ENCODE measurements at regions of chr9 and their contacts with region 1.

Region 1: DNA sequence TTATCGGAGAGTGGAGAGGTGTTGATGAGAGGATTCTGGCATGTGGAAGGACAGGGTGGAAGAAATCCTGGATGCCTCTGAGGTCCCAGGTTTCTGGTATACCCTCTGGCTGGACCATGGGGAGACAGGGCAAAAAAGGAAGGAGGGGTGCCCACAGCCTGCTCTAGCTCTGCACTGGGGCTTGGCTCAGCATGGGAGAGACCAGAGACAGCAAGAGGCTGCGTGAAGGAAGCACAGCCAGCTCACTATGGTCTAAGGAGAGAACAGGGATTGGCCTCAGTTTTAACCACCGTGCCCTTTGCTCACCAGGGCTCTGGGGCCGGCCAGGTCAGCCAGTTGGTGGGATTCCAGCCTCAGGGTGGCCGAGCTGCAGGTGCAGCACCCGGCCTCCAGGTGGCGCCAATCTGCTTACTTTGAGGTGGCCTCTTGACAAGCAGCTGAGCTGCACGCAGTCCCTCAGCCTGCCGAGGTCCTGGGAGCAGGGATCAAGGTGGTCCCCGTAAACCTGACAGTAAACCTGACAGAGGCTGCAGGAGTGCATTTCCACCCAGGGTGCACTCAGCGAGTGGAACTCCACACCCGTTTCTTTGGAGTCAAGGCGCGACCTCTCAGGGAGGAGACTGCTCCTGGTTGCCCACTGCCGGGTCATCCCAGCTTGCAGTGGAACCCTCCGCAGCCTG is 25.0 kb upstream of the SPTLC1 start:
- DNase-seq: peak; percentile 80
- ATAC-seq: peak; percentile 66
- H3K4me3 Mint-ChIP-seq: no peak overlapping the region
- H3K27ac Mint-ChIP-seq: no peak overlapping the region
- H3K4me1 Mint-ChIP-seq: peaks cover 10% of the 10 kb centered on the region
- H3K27me3 Mint-ChIP-seq: peaks cover 38% of the 10 kb centered on the region

Region 2: DNA sequence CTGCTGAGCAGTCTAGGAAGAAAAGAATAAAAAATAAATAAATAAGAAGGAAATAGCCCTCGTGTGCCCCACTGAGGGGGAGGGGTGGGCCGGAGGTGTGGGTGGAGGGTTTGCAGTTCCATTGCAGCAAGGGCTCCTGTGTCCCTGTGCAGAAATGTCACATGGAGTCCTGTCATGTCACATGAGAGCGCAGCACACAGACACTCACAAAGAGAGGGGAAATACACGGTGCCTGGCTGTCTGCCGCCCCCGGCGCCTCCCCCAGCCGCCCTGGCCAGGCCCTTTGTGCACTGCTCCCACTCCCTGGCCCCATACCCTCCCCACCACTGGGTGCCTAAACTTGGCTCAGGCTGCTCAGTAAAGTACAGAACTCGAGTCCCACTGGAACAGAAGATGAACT is 30.6 kb after region 1 on chr9:
- CTCF ChIA-PET with region 1: interaction called, 28 read pairs
- POLR2A ChIA-PET with region 1: no interaction called
- DNase-seq: no peak
- ATAC-seq: no peak
- H3K4me3 Mint-ChIP-seq: no peak overlapping the region
- H3K27ac Mint-ChIP-seq: no peak overlapping the region
- H3K4me1 Mint-ChIP-seq: no peaks in the 10 kb centered on the region
- H3K27me3 Mint-ChIP-seq: peaks cover 21% of the 10 kb centered on the region

Region 3: DNA sequence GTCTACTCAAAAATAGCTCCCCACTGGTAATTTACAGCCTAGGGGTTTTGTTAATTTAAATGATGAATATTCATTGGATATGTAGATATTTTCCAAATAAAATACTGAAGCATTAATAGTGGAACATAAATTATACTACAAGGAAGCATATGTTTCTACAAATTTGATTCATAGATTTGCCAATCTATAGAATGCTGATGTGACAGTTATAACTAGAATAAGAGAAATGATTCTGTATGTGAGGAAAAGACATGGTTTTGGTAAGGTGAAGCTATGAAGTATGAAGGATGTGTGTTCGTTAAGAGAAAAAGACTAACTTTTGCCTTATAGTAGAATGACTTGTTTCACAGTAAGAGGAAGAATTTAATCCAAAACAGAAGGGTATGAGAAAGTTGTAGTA is 92.0 kb after region 1 on chr9:
- CTCF ChIA-PET with region 1: interaction called, 14 read pairs
- POLR2A ChIA-PET with region 1: no interaction called
- DNase-seq: no peak
- ATAC-seq: no peak
- H3K4me3 Mint-ChIP-seq: no peak overlapping the region
- H3K27ac Mint-ChIP-seq: no peak overlapping the region
- H3K4me1 Mint-ChIP-seq: no peaks in the 10 kb centered on the region
- H3K27me3 Mint-ChIP-seq: no peaks in the 10 kb centered on the region

Region 4: DNA sequence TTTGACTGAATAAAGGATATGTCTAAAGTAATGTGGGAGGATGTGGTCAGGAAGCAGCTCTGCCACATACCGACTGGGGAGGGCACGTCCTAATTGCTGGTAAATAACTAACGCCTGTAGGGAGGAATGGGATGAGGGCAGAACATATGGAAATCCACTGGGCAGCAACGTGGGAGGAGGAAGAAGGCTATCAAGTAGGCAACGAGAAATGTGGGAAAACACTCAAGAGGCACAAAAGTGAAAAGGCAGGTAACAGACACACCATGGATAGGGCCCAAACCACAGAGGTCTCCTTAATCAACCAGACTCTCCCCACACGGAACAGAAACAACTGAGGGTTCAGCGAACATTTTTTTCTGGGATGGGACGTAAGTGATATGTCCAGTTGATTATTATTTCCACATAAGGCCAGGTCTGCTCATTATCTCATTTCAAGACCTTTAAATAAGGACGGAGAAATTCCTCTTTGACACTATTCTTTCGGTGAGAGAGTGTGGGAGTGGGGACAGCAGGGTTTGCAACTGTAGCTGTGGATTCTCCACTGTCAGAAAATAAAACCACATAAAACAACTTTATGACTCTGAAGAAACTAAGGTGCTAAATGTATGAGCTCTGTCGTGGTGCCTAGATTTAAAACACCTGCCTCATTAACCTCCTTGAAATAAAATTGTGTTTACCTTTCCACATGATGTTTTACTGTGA is 136.3 kb after region 1 on chr9:
- CTCF ChIA-PET with region 1: interaction called, 47 read pairs
- POLR2A ChIA-PET with region 1: no interaction called
- DNase-seq: peak; percentile 37
- ATAC-seq: peak; percentile 55
- H3K4me3 Mint-ChIP-seq: peak overlapping the region; percentile 32
- H3K27ac Mint-ChIP-seq: peak overlapping the region; percentile 86
- H3K4me1 Mint-ChIP-seq: peaks cover 42% of the 10 kb centered on the region
- H3K27me3 Mint-ChIP-seq: no peaks in the 10 kb centered on the region

Region 5: GRCh38 chr9:92634712-92635605 is 494.7 kb after region 1 on chr9:
- CTCF ChIA-PET with region 1: interaction called, 16 read pairs
- POLR2A ChIA-PET with region 1: no interaction called
- DNase-seq: peak; percentile 75
- ATAC-seq: peak; percentile 78
- H3K4me3 Mint-ChIP-seq: no peak overlapping the region
- H3K27ac Mint-ChIP-seq: peak overlapping the region; percentile 8
- H3K4me1 Mint-ChIP-seq: peaks cover 14% of the 10 kb centered on the region
- H3K27me3 Mint-ChIP-seq: no peaks in the 10 kb centered on the region

Measured in activated CD8-positive, alpha-beta T cell treated with anti-CD3 and anti-CD28 coated beads, Interleukin-2, amount 10 ng/mL, durations not matched to agents 7 days and 5 days (primary cell).